GM12878 (cell line): ENCODE measurements at regions of chr6 and their contacts with region 1.

Region 1: GRCh38 chr6:39407446-39407993 is 85.0 kb upstream of the KCNK16 start:
- DNase-seq: peak; percentile 60
- ATAC-seq: peak; percentile 97
- H3K4me3 ChIP-seq: no peak overlapping the region
- H3K27ac ChIP-seq: no peak overlapping the region
- H3K4me1 ChIP-seq: peaks cover 3% of the 10 kb centered on the region
- H3K27me3 ChIP-seq: no peaks in the 10 kb centered on the region
- CTCF ChIP-seq: no peak
- EP300 ChIP-seq: peak in 1 of 2 experiments; percentile 74; a peak in 1 of 4 replicates
- POLR2A ChIP-seq: no peak
- RAD21 ChIP-seq: no peak

Region 2: GRCh38 chr6:39396854-39397253 is 10.7 kb before region 1 on chr6:
- CTCF ChIA-PET with region 1: interaction called, 12 read pairs
- POLR2A ChIA-PET with region 1: interaction called, 3 read pairs
- RAD21 ChIA-PET with region 1: interaction called, 5 read pairs
- SMC1A ChIA-PET with region 1: interaction called, 10 read pairs
- in situ Hi-C with region 1: no loop called
- intact Hi-C with region 1: no loop called
- DNase-seq: no peak
- ATAC-seq: no peak
- H3K4me3 ChIP-seq: no peak overlapping the region
- H3K27ac ChIP-seq: no peak overlapping the region
- H3K4me1 ChIP-seq: no peaks in the 10 kb centered on the region
- H3K27me3 ChIP-seq: no peaks in the 10 kb centered on the region
- CTCF ChIP-seq: no peak
- EP300 ChIP-seq: no peak
- POLR2A ChIP-seq: no peak
- RAD21 ChIP-seq: no peak

Region 3: GRCh38 chr6:39451831-39452230 is 44.3 kb after region 1 on chr6:
- CTCF ChIA-PET with region 1: interaction called, 10 read pairs
- POLR2A ChIA-PET with region 1: interaction called, 3 read pairs
- RAD21 ChIA-PET with region 1: no interaction called
- SMC1A ChIA-PET with region 1: interaction called, 8 read pairs
- in situ Hi-C with region 1: no loop called
- intact Hi-C with region 1: no loop called
- DNase-seq: no peak
- ATAC-seq: peak; percentile 76
- H3K4me3 ChIP-seq: no peak overlapping the region
- H3K27ac ChIP-seq: no peak overlapping the region
- H3K4me1 ChIP-seq: no peaks in the 10 kb centered on the region
- H3K27me3 ChIP-seq: no peaks in the 10 kb centered on the region
- CTCF ChIP-seq: peak; percentile 40 to 66 (median 60)
- EP300 ChIP-seq: no peak
- POLR2A ChIP-seq: no peak
- RAD21 ChIP-seq: peak; percentile 24; the same call in 1 of the 2 replicates